HCT116 (cell line): ENCODE measurements at regions of chr5 and their contacts with region 1.

Region 1: DNA sequence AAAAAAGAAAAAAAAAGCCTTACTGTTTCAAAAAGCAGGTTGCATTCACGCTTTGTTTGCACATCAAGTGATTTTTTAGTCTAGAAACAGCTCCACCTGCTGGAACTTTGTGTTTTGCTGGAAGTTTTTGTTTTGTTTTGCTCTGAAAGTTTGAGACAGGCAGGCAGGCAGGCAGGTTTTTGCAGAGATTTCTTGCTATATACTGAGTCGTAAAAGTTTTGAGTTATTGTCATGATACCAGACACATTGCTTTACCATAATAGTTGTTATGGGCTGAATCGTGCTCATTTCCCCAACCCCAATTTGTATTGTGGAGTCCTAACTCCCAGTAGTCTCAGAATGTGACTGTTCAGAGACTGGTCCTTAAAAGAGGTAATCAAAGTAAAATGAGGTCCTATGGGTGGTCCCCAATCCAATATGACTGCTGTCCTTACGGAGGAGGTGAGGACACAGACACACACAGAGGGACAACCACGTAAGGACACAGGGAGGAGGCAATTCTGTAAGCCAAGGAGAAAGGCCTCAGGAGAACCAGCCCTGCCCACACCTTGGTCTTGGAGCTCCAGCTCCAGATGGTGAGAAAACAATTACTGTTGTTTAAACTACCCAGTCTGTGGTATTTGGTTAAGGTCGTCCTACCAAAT is 20.9 kb downstream of the OR2Y1 start:
- DNase-seq: peak; percentile 46
- ATAC-seq: peak; percentile 61
- H3K4me3 ChIP-seq: no peak overlapping the region
- H3K27ac ChIP-seq: no peak overlapping the region
- H3K4me1 ChIP-seq: no peaks in the 10 kb centered on the region
- H3K27me3 ChIP-seq: no peaks in the 10 kb centered on the region
- CTCF ChIP-seq: peak; percentile 53 to 71 (median 60)
- POLR2A ChIP-seq: no peak
- RAD21 ChIP-seq: peak; percentile 58

Region 2: GRCh38 chr5:179504600-179505396 is 1214.1 kb before region 1 on chr5:
- CTCF ChIA-PET with region 1: no interaction called
- POLR2A ChIA-PET with region 1: no interaction called
- RAD21 ChIA-PET with region 1: no interaction called
- intact Hi-C with region 1: no loop called
- DNase-seq: no peak
- ATAC-seq: no peak
- H3K4me3 ChIP-seq: no peak overlapping the region
- H3K27ac ChIP-seq: no peak overlapping the region
- H3K4me1 ChIP-seq: no peaks in the 10 kb centered on the region
- H3K27me3 ChIP-seq: peaks cover 2% of the 10 kb centered on the region; the same call in 1 of the 2 replicates
- CTCF ChIP-seq: no peak
- POLR2A ChIP-seq: no peak
- RAD21 ChIP-seq: no peak

Region 3: DNA sequence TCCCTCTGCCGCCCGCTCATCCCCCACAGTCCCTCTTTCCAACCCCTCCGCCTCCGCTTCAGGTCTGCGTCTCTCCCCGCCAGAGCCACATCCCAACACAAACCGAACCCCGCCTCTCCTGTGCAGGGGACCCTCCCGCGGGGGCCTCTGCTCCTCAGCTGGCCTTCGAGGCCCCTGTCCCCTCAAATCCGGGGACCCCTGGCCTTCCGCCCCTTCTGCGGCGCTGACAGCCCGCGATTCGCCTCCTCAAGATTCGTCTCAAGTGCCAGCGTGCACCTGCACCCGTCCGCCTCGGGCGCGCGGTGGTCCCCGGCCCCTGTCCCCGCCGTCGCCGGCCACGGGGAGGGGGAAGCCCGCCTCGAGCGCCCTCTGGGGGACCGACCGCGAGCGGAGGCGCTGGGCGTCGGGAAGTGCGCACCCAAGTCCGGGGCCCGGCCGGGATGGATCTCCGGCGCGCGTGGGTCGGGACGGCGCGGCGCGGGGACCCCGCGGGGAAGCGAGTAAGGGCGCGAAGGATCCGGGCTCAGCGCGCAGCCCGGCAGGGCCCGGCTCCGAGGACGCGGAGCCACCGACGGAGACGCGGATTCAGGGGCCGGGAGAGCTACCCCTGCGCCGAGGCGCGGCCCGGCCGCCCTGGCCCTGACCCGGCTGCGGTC is 70.2 kb before region 1 on chr5:
- CTCF ChIA-PET with region 1: no interaction called
- POLR2A ChIA-PET with region 1: no interaction called
- RAD21 ChIA-PET with region 1: no interaction called
- intact Hi-C with region 1: no loop called
- DNase-seq: no peak
- ATAC-seq: no peak
- H3K4me3 ChIP-seq: no peak overlapping the region
- H3K27ac ChIP-seq: no peak overlapping the region
- H3K4me1 ChIP-seq: no peaks in the 10 kb centered on the region
- H3K27me3 ChIP-seq: no peaks in the 10 kb centered on the region
- CTCF ChIP-seq: no peak
- POLR2A ChIP-seq: no peak
- RAD21 ChIP-seq: no peak

Region 4: DNA sequence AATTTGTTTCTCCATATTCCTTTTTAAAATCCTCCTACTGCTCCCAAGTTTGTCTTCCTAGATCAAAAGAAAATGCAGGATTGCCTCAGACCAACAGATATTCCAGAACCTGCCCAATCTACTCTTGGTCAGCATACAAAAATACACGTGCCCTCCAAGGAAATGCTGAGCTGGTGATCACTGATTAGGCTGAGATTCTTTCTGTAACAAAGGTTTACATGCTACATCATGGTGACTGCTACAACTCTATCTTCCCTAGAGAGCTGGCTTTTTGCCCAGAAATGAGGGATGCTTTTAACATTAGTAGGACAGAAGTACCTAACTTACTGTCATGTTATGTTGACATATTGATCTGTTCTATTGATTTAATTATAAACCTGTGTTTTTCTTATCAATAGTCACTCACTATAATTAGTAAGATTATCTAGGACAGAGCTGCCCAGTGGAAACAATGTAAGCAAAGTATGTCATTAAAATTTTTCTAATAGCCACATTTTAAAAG is 14.5 kb before region 1 on chr5:
- CTCF ChIA-PET with region 1: interaction called, 10 read pairs
- POLR2A ChIA-PET with region 1: interaction called, 3 read pairs
- RAD21 ChIA-PET with region 1: no interaction called
- intact Hi-C with region 1: no loop called
- DNase-seq: peak; percentile 8
- ATAC-seq: no peak
- H3K4me3 ChIP-seq: no peak overlapping the region
- H3K27ac ChIP-seq: no peak overlapping the region
- H3K4me1 ChIP-seq: 0 out of 4 replicates have a peak, but pooled peaks cover 2 to 5% of the 10 kb centered on the region in 2 experiments
- H3K27me3 ChIP-seq: no peaks in the 10 kb centered on the region
- CTCF ChIP-seq: no peak
- POLR2A ChIP-seq: no peak
- RAD21 ChIP-seq: no peak

Region 5: DNA sequence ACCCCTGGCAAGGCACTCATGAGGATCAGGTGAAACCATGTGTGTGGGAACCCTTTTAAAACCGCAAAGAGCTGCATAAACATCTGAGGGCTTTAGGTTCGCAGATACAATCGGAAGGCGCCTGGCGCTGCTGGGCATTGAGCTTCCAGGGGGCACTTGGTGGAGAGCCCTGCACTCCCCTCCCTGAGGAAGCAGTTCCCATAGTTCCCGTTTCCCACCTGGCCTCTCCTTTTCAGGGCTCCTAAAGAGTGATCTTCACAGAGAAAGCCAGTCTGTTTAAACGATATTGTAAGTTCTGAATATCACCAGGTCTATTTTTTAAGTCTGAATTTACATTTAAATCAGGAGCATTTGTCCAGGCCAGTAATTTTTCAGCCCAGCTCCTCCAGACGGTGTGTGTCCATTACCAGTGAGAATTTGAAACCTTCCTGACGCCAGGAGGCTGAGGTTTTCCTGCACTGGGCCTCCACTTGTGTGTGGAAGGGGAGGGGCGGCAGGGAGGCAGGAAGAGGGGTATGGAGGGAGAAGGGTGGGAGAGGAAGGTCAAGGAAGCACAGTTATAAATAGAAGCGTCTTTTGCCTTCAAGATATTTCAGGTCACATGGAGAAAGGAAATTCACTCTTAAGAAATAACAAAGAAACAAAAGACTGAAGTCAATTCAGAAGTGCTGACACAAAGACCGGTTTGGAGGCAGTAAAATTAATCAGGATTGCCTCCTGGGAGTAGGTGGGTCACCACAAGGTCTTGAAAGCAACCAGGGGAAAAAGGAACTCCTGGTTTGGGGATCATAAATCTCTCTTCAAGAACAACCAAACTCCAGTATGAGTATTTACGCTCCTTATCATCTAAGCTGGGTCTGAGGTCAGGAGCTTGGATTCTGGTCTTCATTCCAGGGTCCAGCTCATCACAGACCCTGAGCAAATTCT is 97.9 kb after region 1 on chr5:
- CTCF ChIA-PET with region 1: no interaction called
- POLR2A ChIA-PET with region 1: no interaction called
- RAD21 ChIA-PET with region 1: no interaction called
- intact Hi-C with region 1: no loop called
- DNase-seq: no peak
- ATAC-seq: no peak
- H3K4me3 ChIP-seq: no peak overlapping the region
- H3K27ac ChIP-seq: no peak overlapping the region
- H3K4me1 ChIP-seq: peaks cover under 1 to 2% of the 10 kb centered on the region in 2 experiments; a peak in 3 of 4 replicates
- H3K27me3 ChIP-seq: no peaks in the 10 kb centered on the region
- CTCF ChIP-seq: no peak
- POLR2A ChIP-seq: no peak
- RAD21 ChIP-seq: no peak